GM12878 (cell line): ENCODE measurements at regions of chr3 and their contacts with region 1.

Region 1: DNA sequence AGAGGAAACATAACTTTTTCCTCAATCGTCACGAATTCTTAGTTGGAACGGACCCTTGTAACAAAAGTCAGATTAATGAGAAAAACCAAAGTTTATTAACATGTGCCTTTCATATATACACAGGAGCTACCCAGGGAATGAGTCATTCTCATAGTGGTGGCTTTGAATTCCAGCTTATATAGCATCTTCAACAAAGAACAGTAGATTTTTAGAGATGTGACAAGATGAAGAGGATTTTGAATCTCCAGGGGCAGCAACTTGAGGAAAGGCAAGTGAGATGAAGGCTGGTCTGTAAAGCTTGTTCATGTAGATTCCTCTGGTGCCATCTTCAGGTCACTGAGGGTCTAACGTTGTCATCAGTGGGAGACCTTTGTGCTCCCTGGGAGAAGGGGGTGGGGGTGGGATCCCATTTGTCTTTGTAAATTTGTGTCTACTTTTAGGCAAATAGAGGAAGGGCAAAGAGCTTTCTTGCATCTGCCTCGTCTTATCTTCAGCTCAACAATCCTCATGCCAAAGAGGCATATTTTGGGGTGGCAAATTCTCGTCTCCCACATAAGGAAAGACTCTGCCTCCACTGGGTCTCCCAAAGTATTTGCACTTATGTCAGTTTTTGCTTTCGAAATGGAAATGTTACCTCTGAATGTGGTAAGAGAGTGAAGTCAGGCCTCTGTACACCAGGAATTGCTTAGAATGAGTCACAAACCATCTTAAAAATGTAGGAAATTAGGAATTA is 29.5 kb downstream of the CLEC3B start:
- DNase-seq: no peak
- ATAC-seq: peak; percentile 86
- H3K4me3 ChIP-seq: no peak overlapping the region
- H3K27ac ChIP-seq: no peak overlapping the region
- H3K4me1 ChIP-seq: no peaks in the 10 kb centered on the region
- H3K27me3 ChIP-seq: no peaks in the 10 kb centered on the region
- CTCF ChIP-seq: peak; percentile 36 to 49 (median 43); a peak in 4 of 6 replicates
- EP300 ChIP-seq: no peak
- POLR2A ChIP-seq: no peak
- RAD21 ChIP-seq: peak; percentile 55

Region 2: GRCh38 chr3:44561076-44561475 is 494.5 kb before region 1 on chr3:
- CTCF ChIA-PET with region 1: no interaction called
- POLR2A ChIA-PET with region 1: no interaction called
- RAD21 ChIA-PET with region 1: no interaction called
- SMC1A ChIA-PET with region 1: no interaction called
- in situ Hi-C with region 1: no loop called
- intact Hi-C with region 1: no loop called
- DNase-seq: no peak
- ATAC-seq: no peak
- H3K4me3 ChIP-seq: no peak overlapping the region
- H3K27ac ChIP-seq: no peak overlapping the region
- H3K4me1 ChIP-seq: no peaks in the 10 kb centered on the region
- H3K27me3 ChIP-seq: no peaks in the 10 kb centered on the region
- CTCF ChIP-seq: no peak
- EP300 ChIP-seq: no peak
- POLR2A ChIP-seq: no peak
- RAD21 ChIP-seq: no peak

Region 3: GRCh38 chr3:45026038-45026437 is 29.5 kb before region 1 on chr3 and contains the start of gene CLEC3B:
- CTCF ChIA-PET with region 1: no interaction called
- POLR2A ChIA-PET with region 1: no interaction called
- RAD21 ChIA-PET with region 1: no interaction called
- SMC1A ChIA-PET with region 1: no interaction called
- in situ Hi-C with region 1: no loop called
- intact Hi-C with region 1: no loop called
- DNase-seq: no peak
- ATAC-seq: no peak
- H3K4me3 ChIP-seq: no peak within 1 kb of the TSS
- H3K27ac ChIP-seq: no peak within 1 kb of the TSS
- H3K4me1 ChIP-seq: no peaks in the 10 kb centered on the region
- H3K27me3 ChIP-seq: no peaks in the 10 kb centered on the region
- CTCF ChIP-seq: no peak
- EP300 ChIP-seq: no peak
- POLR2A ChIP-seq: no peak
- RAD21 ChIP-seq: no peak
- polyA plus RNA-seq, gene CLEC3B: not detected

Region 4: DNA sequence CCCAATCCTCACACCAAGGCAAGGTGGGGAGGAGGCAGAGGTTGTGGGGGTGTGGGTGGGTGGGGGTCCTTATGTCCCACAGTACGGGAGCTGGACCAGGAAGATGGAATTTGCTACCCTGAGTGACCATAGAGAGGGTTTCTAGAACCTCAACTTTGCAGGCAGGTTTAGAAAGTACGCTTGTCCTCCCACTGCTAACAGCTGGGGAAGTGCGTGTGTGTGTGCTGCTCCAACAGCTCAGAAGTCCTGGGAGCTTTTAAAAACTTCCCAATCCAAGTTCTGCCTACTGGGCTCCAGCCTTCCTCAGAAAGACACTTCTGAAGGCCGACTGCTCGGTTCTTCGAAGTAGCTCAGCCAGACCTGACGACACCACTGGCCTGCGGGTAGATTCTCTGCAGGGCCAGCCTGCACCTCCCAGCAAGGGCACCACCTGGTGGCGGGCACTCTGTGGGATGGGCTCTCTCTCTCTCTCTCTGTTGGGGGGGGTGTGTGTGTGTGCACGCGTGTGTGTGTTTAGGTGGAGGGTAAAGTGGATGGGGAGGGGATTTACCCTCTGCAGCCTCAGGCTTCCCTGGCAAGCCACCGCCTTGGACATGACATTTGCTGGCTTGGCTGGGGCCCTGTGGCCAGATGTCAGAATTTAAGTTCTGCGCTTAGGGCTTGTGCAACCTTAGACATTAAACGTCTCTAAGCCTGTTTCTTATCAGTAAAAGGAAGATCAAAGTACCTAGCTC is 154.9 kb after region 1 on chr3:
- CTCF ChIA-PET with region 1: interaction called, 30 read pairs
- POLR2A ChIA-PET with region 1: no interaction called
- RAD21 ChIA-PET with region 1: interaction called, 12 read pairs
- SMC1A ChIA-PET with region 1: interaction called, 30 read pairs
- in situ Hi-C with region 1: no loop called
- intact Hi-C with region 1: no loop called
- DNase-seq: no peak
- ATAC-seq: peak; percentile 98
- H3K4me3 ChIP-seq: no peak overlapping the region
- H3K27ac ChIP-seq: no peak overlapping the region
- H3K4me1 ChIP-seq: no peaks in the 10 kb centered on the region
- H3K27me3 ChIP-seq: peaks cover 2 to 3% of the 10 kb centered on the region in 2 experiments; a peak in 3 of 4 replicates
- CTCF ChIP-seq: peak; percentile 60 to 75 (median 70); a peak in 5 of 6 replicates
- EP300 ChIP-seq: no peak
- POLR2A ChIP-seq: no peak
- RAD21 ChIP-seq: peak; percentile 44